Activated B cell treated with CpG ODN at 0.5 μM for 24 hours (primary cell): ENCODE measurements at regions of chr2 and their contacts with region 1.

Region 1: GRCh38 chr2:229937523-229937922 is 15.2 kb downstream of the FBXO36 start:
- DNase-seq: no peak
- ATAC-seq: no peak
- H3K4me3 Mint-ChIP-seq: no peak overlapping the region
- H3K27ac Mint-ChIP-seq: no peak overlapping the region
- H3K4me1 Mint-ChIP-seq: no peaks in the 10 kb centered on the region
- H3K27me3 Mint-ChIP-seq: no peaks in the 10 kb centered on the region
- CTCF ChIP-seq: no peak

Region 2: GRCh38 chr2:230723363-230723762 is 785.8 kb after region 1 on chr2:
- CTCF ChIA-PET with region 1: no interaction called
- POLR2A ChIA-PET with region 1: interaction called, 17 read pairs
- intact Hi-C with region 1: no loop called
- DNase-seq: no peak
- ATAC-seq: no peak
- H3K4me3 Mint-ChIP-seq: no peak overlapping the region
- H3K27ac Mint-ChIP-seq: no peak overlapping the region
- H3K4me1 Mint-ChIP-seq: peaks cover 55% of the 10 kb centered on the region
- H3K27me3 Mint-ChIP-seq: no peaks in the 10 kb centered on the region
- CTCF ChIP-seq: no peak